ENCODE measurements at regions of chr3 and their contacts with region 1.

Region 1: DNA sequence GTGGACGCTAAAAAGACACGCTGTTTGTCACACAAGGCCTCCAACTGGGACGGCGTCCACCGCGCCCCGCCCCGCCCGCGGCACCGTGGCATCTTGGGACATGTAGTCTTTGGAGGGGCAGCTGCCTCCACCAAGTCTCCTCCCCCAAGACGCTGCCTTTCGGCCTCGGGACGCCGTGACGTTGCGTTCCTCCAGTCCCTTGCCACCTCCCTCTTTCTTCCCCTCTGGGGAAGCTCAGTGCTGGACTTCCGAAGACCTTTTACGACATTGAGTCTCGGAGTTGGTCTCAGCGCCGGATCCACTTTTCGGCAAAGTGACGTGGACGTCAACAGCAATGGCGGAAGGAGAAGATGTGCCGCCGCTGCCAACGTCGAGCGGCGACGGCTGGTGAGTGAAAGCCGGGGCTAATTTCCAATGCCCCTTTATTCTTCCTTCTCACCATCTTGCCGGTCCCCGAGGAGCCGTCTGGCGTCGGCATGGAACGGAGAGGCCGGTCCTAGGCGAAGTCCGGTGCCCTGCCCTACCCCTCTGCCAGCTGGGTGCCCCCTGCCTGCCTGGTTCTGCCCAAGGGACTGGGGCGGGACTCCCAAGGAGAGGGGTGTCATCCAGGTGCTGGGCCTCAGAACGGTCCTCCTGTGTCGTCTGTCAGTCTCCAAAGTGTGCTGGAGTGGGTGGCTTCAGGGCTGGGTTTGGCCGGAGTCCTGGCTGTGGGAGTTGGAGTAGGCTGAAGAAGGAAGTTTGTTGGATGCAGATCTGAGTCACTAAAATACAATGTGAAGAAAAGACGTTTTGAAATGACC is at the start of gene TBC1D23:
- DNase-seq: peak; percentile 99 to 100
- ATAC-seq: peak; percentile 94 to 95
- H3K4me3 ChIP-seq: peak within 1 kb of the TSS; percentile 82 to 100 (median 92)
- H3K27ac ChIP-seq: peak within 1 kb of the TSS; percentile 95 to 100 (median 98)
- H3K4me1 ChIP-seq: peaks cover 50 to 54% of the 10 kb centered on the region in 2 donors
- H3K27me3 ChIP-seq: no peaks in the 10 kb centered on the region
- CTCF ChIP-seq: peak in 2 of 5 experiments; percentile 20 to 23
- POLR2A ChIP-seq: peak; percentile 97 to 98
- total RNA-seq, gene TBC1D23: 14.2 to 56.4 (median 45.0) TPM

Region 2: GRCh38 chr3:99850608-99851007 is 410.3 kb before region 1 on chr3:
- in situ Hi-C with region 1: no loop called
- intact Hi-C with region 1: no loop called
- DNase-seq: no peak
- ATAC-seq: no peak
- H3K4me3 ChIP-seq: no peak overlapping the region
- H3K27ac ChIP-seq: peak overlapping the region in 1 of 4 donors; percentile 77
- H3K4me1 ChIP-seq: peaks cover 30 to 40% of the 10 kb centered on the region in 2 donors
- H3K27me3 ChIP-seq: no peaks in the 10 kb centered on the region
- CTCF ChIP-seq: no peak
- POLR2A ChIP-seq: no peak

Region 3: DNA sequence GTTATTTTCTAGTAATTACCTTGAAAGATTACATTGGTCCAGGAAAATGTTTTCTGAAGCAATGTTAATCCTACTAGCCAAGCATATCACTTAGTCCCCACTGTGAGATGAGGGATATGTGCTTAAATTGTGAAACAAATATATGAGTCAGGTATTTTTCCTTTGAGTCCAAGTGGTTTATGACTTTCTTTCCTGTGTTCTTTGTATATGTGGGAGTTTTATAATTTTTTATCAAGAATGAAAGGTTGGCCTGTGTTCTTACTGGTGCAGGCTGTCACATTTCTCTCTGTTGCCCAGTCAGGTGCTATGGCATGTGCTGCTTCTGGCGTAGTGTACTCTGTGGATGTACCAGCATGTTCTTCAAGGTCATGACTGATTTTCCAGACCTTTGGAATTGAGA is 295.8 kb before region 1 on chr3:
- in situ Hi-C with region 1: no loop called
- intact Hi-C with region 1: loop called (anchors 10 kb)
- DNase-seq: peak in 1 of 2 donors; percentile 59
- ATAC-seq: peak; percentile 42 to 53
- H3K4me3 ChIP-seq: no peak overlapping the region
- H3K27ac ChIP-seq: peak overlapping the region; percentile 75 to 84 (median 81)
- H3K4me1 ChIP-seq: peaks cover 79 to 81% of the 10 kb centered on the region in 2 donors
- H3K27me3 ChIP-seq: no peaks in the 10 kb centered on the region
- CTCF ChIP-seq: no peak
- POLR2A ChIP-seq: no peak

Region 4: DNA sequence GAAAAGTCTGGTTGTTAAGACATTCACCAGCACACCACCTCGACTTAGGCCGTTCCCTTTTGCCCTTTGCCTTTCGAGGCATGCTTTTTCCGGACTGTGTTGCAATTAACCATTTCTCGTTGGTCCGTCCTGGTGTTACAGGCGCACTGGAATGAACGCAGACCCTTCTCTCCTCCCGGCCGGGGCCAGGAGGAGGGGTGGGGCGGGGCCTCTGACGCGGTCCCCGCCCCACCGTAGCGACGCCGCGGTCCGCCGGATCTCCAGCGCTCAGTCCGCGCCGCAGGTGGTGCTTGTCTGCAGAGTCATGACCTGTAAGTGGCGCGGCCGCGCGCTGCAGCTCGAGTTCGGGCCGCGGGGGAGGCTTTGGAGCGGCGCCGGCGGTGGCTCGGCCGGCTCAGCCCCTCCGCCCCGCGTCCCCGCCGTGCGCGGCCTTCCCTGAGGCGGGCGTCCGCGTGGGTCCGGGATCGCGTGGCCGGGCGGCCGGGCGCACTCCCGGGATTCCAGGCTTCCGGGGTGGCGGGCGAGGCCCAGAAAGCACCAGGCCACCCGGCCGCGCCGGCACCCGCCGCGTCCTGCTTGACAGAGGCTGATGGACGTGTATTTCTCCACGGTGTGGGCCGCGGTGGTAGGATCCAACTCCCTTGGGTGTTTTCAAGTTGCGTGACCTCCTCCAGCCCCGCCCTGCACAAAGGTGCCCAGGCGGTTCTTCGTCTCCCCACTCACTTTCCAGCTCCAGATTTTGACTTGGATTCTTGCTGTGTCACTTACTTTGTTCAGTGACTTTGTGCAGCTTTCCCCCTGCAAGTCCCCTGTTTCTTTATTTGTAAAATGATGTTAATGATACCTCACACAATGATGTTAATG is 73.8 kb after region 1 on chr3 and contains the start of gene NIT2:
- in situ Hi-C with region 1: no loop called
- intact Hi-C with region 1: loop called (anchors 5 kb)
- DNase-seq: peak; percentile 69 to 85
- ATAC-seq: peak; percentile 89 to 91
- H3K4me3 ChIP-seq: peak within 1 kb of the TSS; percentile 59 to 68 (median 64)
- H3K27ac ChIP-seq: peak within 1 kb of the TSS; percentile 85 to 89 (median 88)
- H3K4me1 ChIP-seq: peaks cover 0 to 10% of the 10 kb centered on the region in 2 donors
- H3K27me3 ChIP-seq: no peaks in the 10 kb centered on the region
- CTCF ChIP-seq: peak in 1 of 5 experiments; percentile 15
- POLR2A ChIP-seq: peak; percentile 76 to 78
- total RNA-seq, gene NIT2: 13.5 to 45.2 (median 24.2) TPM

Region 5: GRCh38 chr3:101842245-101842934 is 1581.5 kb after region 1 on chr3:
- in situ Hi-C with region 1: no loop called
- intact Hi-C with region 1: loop called (anchors 5 kb)
- DNase-seq: no peak
- ATAC-seq: no peak
- H3K4me3 ChIP-seq: no peak overlapping the region
- H3K27ac ChIP-seq: no peak overlapping the region
- H3K4me1 ChIP-seq: peaks cover under 1 to 11% of the 10 kb centered on the region in 2 donors
- H3K27me3 ChIP-seq: no peaks in the 10 kb centered on the region
- CTCF ChIP-seq: no peak
- POLR2A ChIP-seq: no peak